Ascending aorta (tissue), 2 donors: ENCODE measurements at regions of chr3 and their contacts with region 1.

Region 1: DNA sequence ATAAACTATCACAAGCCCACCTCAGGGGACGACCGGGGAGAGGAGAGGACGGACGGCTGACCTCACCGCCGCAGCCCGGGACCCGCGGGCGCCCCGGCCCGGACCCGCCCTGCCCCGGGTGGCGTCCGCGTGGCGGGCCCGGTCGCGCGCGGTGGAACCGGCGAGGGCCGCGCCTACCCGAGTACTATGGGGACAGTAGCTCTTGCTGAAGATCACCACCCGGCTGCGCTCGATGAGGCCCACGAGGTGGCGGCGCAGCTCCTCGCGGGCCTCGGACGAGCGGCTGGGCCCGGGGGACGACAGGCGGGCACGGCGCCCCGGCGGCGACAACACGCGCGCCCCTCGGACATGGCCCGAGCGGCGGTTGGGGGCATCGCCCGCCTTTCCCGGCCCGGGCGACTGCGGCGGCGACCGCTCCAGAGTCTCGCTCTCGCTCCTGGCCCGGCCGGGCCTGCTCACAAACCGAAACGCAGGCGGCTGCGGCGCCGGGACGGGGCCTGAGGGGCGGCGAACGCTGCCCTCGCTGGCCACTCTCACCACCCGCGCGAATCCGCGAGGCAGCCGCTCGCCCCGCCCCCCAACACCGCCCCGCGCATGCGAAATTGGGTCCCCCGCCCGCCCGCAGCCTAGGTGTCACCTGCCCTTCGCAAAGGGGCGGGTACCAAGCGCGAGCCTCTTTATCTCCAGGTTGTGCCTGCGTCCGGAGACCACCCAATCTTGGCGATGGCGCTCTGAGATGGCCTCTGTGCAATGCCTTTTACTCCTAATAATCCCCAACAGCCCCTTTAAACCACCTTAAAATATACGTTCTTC is at the start of gene TXNRD3:
- DNase-seq: peak; percentile 30 to 88
- H3K4me3 ChIP-seq: peak within 1 kb of the TSS; percentile 76 to 84
- H3K27ac ChIP-seq: peak within 1 kb of the TSS; percentile 64 to 77
- H3K4me1 ChIP-seq: no peaks in the 10 kb centered on the region
- H3K27me3 ChIP-seq: no peaks in the 10 kb centered on the region
- CTCF ChIP-seq: peak in 1 of 3 experiments; percentile 12
- total RNA-seq, gene TXNRD3: 18.9 TPM

Region 2: DNA sequence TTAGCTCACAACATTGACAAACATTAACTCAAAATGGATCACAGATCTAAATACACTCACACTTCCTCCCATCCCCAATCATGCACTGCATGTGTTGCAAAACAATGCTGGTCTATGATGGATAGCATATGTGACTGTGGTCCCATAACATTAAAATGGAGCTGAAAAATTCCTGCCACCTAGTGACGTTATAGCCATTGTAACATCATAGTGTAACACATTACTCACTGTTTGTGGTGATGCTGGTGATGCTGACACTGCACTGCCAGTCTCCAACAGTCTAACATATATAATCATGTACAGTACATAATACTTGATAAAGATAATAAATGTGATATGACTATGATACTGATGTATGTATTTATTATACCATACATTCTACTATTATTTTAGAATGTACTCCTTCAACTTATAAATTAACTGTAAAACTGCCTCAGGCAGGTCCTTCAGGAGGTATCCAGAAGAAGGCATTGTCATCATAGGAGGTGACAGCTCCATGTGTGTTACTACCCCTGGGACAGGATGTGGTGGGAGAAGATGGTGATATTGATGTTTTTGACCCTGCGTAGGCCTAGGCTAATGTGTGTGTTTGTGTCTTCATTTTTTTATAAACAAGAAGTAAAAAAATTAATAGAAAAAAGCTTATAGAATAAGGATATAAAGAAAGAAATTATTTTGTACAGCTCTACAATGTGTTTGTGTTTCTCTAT is 41.1 kb before region 1 on chr3:
- intact Hi-C with region 1: no loop called
- DNase-seq: no peak
- H3K4me3 ChIP-seq: no peak overlapping the region
- H3K27ac ChIP-seq: no peak overlapping the region
- H3K4me1 ChIP-seq: no peaks in the 10 kb centered on the region
- H3K27me3 ChIP-seq: no peaks in the 10 kb centered on the region
- CTCF ChIP-seq: no peak

Region 3: DNA sequence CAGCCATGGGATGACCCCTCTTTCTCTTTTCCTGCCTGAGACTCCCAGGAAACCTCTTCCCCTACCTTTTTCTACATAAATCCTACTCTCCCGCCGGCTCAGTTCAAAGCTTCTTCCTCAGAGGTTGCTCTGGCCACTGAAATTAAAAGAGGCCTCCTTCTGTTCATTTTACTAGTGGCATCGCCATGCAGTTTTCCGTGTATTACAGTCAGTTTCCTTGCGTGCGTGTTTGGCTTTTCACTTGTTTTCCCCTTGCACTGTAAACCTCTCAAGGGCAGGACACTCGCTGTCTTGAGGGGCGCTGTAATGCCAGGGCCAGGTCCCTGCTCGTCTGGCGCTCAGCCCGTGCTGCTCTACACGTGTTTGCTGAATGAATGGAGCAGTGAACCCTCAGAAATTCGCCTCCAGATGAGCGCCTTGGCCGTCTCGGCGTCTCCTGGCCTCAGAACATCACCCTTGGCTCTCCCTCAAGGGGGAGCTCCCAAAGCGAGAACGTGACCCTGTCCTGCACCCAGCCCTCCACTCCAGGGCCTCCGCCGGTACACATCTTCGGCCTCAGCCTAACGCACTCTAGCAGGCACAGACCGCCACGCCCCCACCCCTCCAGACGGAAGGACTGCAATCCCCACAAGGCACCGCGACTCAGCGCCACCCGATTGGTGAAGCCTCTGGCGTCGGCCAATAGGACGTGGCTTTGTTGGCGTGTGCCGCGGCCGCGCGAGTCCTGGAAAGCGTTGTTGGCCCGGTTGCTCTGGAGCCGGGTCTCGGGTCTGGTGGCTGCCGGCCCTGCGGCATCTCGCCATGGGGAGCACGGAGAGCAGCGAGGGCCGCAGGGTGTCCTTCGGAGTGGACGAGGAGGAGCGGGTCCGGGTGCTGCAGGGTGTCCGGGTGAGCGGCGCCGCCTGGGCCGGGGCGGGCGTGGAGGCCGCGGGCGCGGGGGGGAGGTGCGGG is 49.0 kb after region 1 on chr3 and contains the start of gene CHCHD6:
- intact Hi-C with region 1: loop called (anchors 2 kb)
- DNase-seq: peak; percentile 79 to 97
- H3K4me3 ChIP-seq: peak within 1 kb of the TSS; percentile 59 to 89
- H3K27ac ChIP-seq: no peak within 1 kb of the TSS
- H3K4me1 ChIP-seq: peaks cover 0 to 3% of the 10 kb centered on the region in 2 donors
- H3K27me3 ChIP-seq: no peaks in the 10 kb centered on the region
- CTCF ChIP-seq: peak in 1 of 3 experiments; percentile 9
- total RNA-seq, gene CHCHD6: 1.2 TPM